Sigmoid colon (tissue), 7 donors: ENCODE measurements at regions of chr6 and their contacts with region 1.

Region 1: GRCh38 chr6:138833816-138834539 is 38.1 kb downstream of the ECT2L start:
- DNase-seq: no peak
- H3K4me3 ChIP-seq: no peak overlapping the region
- H3K27ac ChIP-seq: peak overlapping the region in 3 of 4 donors; percentile 8 to 59 (median 56)
- H3K4me1 ChIP-seq: peaks cover 0 to 24% (median 10%) of the 10 kb centered on the region in 4 donors
- H3K27me3 ChIP-seq: no peaks in the 10 kb centered on the region
- CTCF ChIP-seq: no peak
- EP300 ChIP-seq: no peak
- POLR2A ChIP-seq: no peak

Region 2: GRCh38 chr6:138869398-138869797 is 35.4 kb after region 1 on chr6:
- intact Hi-C with region 1: loop called (anchors 5 kb)
- DNase-seq: no peak
- H3K4me3 ChIP-seq: no peak overlapping the region
- H3K27ac ChIP-seq: peak overlapping the region in 3 of 4 donors; percentile 51 to 76 (median 58)
- H3K4me1 ChIP-seq: peaks cover 0 to 46% (median 23%) of the 10 kb centered on the region in 4 donors
- H3K27me3 ChIP-seq: no peaks in the 10 kb centered on the region
- CTCF ChIP-seq: no peak
- EP300 ChIP-seq: no peak
- POLR2A ChIP-seq: no peak